PC-3 (cell line): ENCODE measurements at regions of chr5 and their contacts with region 1.

Region 1: GRCh38 chr5:18772207-18772874 is 1138.1 kb downstream of the TAF11L14 start:
- DNase-seq: peak; percentile 88
- ATAC-seq: peak; percentile 94
- H3K4me3 ChIP-seq: peak overlapping the region; percentile 29; the same call in 1 of the 2 replicates
- H3K27ac ChIP-seq: no peak overlapping the region
- H3K4me1 ChIP-seq: no peaks in the 10 kb centered on the region
- H3K27me3 ChIP-seq: no peaks in the 10 kb centered on the region
- CTCF ChIP-seq: peak; percentile 91

Region 2: DNA sequence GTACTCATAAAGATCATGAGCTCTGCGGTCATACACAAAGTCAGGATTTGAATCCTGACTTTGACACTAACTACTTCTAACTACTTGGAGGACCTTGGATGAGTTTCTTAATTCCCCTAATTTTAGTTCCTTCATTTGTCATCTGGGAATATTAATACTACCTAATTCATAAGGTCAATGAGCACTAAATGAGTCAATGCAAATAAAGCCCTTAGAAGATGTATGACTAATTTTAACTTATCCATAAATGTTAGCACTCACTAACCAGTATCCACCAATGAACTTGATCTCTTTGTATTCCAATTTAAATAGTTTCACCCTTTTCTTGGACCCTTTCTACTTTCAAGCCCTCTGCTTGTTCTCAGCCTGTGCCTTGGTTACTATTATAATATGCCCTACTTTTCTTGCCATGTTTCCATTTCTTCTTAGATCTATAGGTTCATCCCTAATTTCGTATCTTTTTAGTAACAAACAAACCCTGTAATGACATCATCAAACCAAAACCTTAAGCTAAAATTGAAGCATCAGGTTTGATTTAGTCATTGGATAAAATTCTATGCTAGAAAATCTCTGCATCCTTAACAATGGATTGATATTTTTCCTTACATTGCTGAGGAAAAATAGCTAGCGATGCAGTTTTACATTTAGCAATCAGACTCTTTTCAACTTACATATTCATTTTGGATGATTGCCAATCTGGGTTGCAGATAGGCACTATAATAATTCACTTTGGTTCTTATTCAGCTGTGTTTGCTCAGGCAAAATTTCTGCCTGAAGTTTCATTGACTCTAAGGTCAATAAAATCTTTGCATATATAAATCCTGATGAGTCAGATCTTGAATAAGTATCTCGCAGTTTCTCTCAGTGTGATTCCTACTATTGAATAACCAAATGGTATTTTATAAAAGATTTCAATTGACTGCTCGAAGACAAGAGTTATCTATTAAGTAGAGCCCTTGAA is 109.6 kb after region 1 on chr5:
- CTCF ChIA-PET with region 1: no interaction called
- POLR2A ChIA-PET with region 1: no interaction called
- intact Hi-C with region 1: loop called (anchors 2 kb)
- DNase-seq: peak; percentile 90
- ATAC-seq: peak; percentile 85
- H3K4me3 ChIP-seq: peak overlapping the region; percentile 28
- H3K27ac ChIP-seq: peak overlapping the region; percentile 92
- H3K4me1 ChIP-seq: peaks cover 27% of the 10 kb centered on the region
- H3K27me3 ChIP-seq: no peaks in the 10 kb centered on the region
- CTCF ChIP-seq: no peak

Region 3: GRCh38 chr5:18932081-18932480 is 159.7 kb after region 1 on chr5:
- CTCF ChIA-PET with region 1: no interaction called
- POLR2A ChIA-PET with region 1: no interaction called
- intact Hi-C with region 1: no loop called
- DNase-seq: no peak
- ATAC-seq: no peak
- H3K4me3 ChIP-seq: no peak overlapping the region
- H3K27ac ChIP-seq: no peak overlapping the region
- H3K4me1 ChIP-seq: no peaks in the 10 kb centered on the region
- H3K27me3 ChIP-seq: no peaks in the 10 kb centered on the region
- CTCF ChIP-seq: no peak

Region 4: DNA sequence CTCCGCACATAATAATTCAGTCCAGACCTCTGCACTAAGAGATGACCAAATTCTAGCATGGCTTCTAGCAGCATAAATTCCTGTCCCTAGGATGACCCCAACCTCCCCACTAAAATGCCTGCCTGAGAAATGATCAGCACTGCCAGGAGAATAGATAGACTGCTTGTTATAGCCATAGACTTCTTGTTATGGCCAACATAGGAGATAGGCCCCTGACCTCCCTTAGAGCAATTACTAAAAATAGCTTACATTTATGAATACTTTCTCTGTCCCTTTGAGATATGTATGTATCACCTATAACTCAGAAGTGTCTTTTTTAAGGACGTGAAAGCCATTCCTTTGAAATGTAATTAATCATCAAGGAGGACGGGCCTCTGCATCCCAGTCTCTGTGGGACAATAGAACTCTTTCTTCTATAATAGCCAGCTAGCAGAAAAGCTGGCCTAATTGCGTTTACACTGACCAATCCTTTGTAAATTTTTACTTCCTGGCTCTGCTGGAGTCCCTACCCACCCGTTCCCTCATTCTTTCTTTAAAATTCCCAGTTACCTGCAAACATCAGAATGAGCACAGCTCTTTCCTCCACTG is 212.9 kb after region 1 on chr5:
- CTCF ChIA-PET with region 1: no interaction called
- POLR2A ChIA-PET with region 1: no interaction called
- intact Hi-C with region 1: loop called (anchors 1 kb)
- DNase-seq: peak; percentile 67
- ATAC-seq: peak; percentile 74
- H3K4me3 ChIP-seq: no peak overlapping the region
- H3K27ac ChIP-seq: peak overlapping the region; percentile 87
- H3K4me1 ChIP-seq: peaks cover 18% of the 10 kb centered on the region
- H3K27me3 ChIP-seq: no peaks in the 10 kb centered on the region
- CTCF ChIP-seq: no peak

Region 5: GRCh38 chr5:19240170-19240569 is 467.8 kb after region 1 on chr5:
- CTCF ChIA-PET with region 1: no interaction called
- POLR2A ChIA-PET with region 1: no interaction called
- intact Hi-C with region 1: loop called (anchors 10 kb)
- DNase-seq: peak; percentile 89
- ATAC-seq: peak; percentile 93
- H3K4me3 ChIP-seq: no peak overlapping the region
- H3K27ac ChIP-seq: no peak overlapping the region
- H3K4me1 ChIP-seq: peaks cover 26% of the 10 kb centered on the region
- H3K27me3 ChIP-seq: no peaks in the 10 kb centered on the region
- CTCF ChIP-seq: no peak

Region 6: DNA sequence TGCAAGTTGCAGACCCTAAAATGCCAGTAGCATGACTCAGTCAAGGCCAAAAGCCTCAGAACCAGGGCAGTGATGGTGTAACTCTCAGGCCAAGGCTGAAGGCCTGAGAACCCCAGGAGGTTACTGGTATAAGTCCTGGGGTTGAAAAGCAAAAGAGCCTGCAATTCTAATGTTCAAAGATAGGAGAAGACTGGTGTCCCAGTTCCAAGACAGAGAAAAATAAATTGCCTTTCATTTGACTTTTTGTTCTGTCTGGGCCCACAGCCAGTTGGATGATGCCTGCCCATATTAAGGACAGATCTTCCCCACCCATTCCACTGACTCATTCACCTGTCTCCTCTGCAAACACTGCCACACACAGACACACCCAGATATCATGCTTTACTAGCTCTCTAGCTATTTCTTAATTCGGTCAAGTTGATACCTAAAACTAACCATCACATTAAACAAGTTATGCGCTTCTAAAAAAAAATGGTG is 542.5 kb after region 1 on chr5:
- CTCF ChIA-PET with region 1: no interaction called
- POLR2A ChIA-PET with region 1: no interaction called
- intact Hi-C with region 1: loop called (anchors 2 kb)
- DNase-seq: peak; percentile 97
- ATAC-seq: peak; percentile 98
- H3K4me3 ChIP-seq: no peak overlapping the region
- H3K27ac ChIP-seq: peak overlapping the region; percentile 62
- H3K4me1 ChIP-seq: peaks cover 20% of the 10 kb centered on the region
- H3K27me3 ChIP-seq: no peaks in the 10 kb centered on the region
- CTCF ChIP-seq: peak; percentile 54

Region 7: GRCh38 chr5:19369048-19369447 is 596.7 kb after region 1 on chr5:
- CTCF ChIA-PET with region 1: no interaction called
- POLR2A ChIA-PET with region 1: no interaction called
- intact Hi-C with region 1: loop called (anchors 2 kb)
- DNase-seq: no peak
- ATAC-seq: no peak
- H3K4me3 ChIP-seq: no peak overlapping the region
- H3K27ac ChIP-seq: no peak overlapping the region
- H3K4me1 ChIP-seq: peaks cover 13% of the 10 kb centered on the region
- H3K27me3 ChIP-seq: no peaks in the 10 kb centered on the region
- CTCF ChIP-seq: no peak